Activated B cell treated with CpG ODN at 0.5 μM for 24 hours (primary cell): ENCODE measurements at regions of chr14 and their contacts with region 1.

Region 1: GRCh38 chr14:91323671-91324605 is 79.4 kb upstream of the GPR68 start:
- DNase-seq: peak; percentile 89
- ATAC-seq: peak; percentile 83
- H3K4me3 Mint-ChIP-seq: peak overlapping the region; percentile 89
- H3K27ac Mint-ChIP-seq: peak overlapping the region; percentile 100
- H3K4me1 Mint-ChIP-seq: peaks cover 60% of the 10 kb centered on the region
- H3K27me3 Mint-ChIP-seq: no peaks in the 10 kb centered on the region
- CTCF ChIP-seq: no peak

Region 2: GRCh38 chr14:91114079-91115065 is 209.6 kb before region 1 on chr14:
- CTCF ChIA-PET with region 1: no interaction called
- POLR2A ChIA-PET with region 1: no interaction called
- intact Hi-C with region 1: no loop called
- DNase-seq: peak; percentile 54
- ATAC-seq: peak; percentile 84
- H3K4me3 Mint-ChIP-seq: peak overlapping the region; percentile 98
- H3K27ac Mint-ChIP-seq: peak overlapping the region; percentile 98
- H3K4me1 Mint-ChIP-seq: peaks cover 67% of the 10 kb centered on the region
- H3K27me3 Mint-ChIP-seq: no peaks in the 10 kb centered on the region
- CTCF ChIP-seq: no peak

Region 3: DNA sequence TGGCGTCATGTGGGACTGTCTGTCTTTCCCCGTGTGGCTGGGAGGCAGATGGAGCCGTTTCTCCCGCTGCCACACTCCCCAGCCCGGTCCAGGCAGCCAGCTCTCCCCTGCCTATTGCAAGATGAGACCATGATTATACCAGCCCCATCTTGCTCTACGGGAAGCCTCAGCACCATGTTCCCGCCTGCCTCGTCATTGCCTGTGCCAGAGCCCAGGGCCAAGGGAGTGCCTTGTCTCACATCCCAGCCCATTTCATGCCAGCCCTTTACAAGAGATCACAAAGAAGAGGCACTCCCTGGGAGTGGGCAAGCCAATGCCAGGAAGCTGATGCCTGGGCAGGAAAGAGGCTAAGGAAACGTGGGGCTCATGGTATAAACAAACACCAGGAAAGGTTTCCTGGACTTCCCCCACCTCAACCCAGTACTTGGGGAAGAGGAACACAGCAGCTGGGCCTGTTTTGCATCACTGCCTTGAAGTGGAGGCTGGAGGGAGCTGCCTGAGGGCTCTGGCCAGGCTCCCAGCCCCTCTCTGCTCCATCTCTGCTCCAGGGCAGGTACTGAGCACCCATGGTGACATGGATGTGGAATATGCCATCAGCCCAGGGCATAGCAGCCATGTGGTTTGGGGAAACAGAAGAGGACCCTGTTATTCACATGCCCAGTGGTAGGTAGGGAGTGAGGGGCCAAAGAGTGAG is 103.2 kb before region 1 on chr14:
- CTCF ChIA-PET with region 1: no interaction called
- POLR2A ChIA-PET with region 1: no interaction called
- intact Hi-C with region 1: no loop called
- DNase-seq: no peak
- ATAC-seq: no peak
- H3K4me3 Mint-ChIP-seq: no peak overlapping the region
- H3K27ac Mint-ChIP-seq: no peak overlapping the region
- H3K4me1 Mint-ChIP-seq: peaks cover 8% of the 10 kb centered on the region
- H3K27me3 Mint-ChIP-seq: no peaks in the 10 kb centered on the region
- CTCF ChIP-seq: no peak

Region 4: DNA sequence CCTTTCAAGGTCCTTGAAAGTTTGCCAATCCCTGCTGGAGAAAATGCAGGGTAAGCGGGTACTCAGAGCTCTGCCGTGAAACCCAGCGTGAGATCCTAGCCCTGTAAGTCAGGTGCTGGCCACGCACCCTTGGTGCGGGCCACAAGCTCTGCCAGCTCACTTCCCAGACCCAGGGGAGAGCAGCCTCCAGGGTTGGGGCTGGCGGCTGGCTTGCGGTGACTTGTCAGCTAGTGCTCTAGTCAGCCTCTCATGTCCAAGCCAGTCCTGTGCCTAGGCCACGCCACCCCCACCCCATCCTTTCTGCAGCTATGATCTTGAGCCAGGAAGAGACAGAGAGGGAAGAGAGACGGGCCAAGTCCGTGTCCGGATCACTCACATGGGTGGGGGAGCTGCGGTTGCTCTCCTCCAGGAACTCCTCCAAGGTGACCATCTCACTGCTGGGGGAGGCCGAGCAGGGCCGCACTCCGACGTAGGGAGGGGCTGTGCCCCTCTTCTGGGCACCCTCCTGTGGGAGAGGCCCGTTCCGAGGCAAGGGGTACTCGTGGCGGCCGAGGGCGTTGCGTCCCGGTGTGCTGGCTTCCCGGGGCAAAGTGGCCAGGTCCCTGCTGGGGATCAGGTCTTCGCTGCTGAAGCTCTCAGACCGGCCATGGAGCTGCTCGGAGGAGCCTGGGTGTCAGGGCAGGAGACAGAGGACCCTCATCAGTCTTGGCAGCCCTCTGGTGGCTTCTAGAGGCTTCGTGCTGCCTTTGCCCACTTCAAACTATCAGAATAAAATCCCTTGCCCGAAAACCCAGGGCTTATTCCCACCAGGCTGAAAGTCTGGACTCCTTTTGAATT is 46.2 kb before region 1 on chr14:
- CTCF ChIA-PET with region 1: no interaction called
- POLR2A ChIA-PET with region 1: no interaction called
- intact Hi-C with region 1: no loop called
- DNase-seq: no peak
- ATAC-seq: no peak
- H3K4me3 Mint-ChIP-seq: no peak overlapping the region
- H3K27ac Mint-ChIP-seq: no peak overlapping the region
- H3K4me1 Mint-ChIP-seq: no peaks in the 10 kb centered on the region
- H3K27me3 Mint-ChIP-seq: no peaks in the 10 kb centered on the region
- CTCF ChIP-seq: no peak

Region 5: DNA sequence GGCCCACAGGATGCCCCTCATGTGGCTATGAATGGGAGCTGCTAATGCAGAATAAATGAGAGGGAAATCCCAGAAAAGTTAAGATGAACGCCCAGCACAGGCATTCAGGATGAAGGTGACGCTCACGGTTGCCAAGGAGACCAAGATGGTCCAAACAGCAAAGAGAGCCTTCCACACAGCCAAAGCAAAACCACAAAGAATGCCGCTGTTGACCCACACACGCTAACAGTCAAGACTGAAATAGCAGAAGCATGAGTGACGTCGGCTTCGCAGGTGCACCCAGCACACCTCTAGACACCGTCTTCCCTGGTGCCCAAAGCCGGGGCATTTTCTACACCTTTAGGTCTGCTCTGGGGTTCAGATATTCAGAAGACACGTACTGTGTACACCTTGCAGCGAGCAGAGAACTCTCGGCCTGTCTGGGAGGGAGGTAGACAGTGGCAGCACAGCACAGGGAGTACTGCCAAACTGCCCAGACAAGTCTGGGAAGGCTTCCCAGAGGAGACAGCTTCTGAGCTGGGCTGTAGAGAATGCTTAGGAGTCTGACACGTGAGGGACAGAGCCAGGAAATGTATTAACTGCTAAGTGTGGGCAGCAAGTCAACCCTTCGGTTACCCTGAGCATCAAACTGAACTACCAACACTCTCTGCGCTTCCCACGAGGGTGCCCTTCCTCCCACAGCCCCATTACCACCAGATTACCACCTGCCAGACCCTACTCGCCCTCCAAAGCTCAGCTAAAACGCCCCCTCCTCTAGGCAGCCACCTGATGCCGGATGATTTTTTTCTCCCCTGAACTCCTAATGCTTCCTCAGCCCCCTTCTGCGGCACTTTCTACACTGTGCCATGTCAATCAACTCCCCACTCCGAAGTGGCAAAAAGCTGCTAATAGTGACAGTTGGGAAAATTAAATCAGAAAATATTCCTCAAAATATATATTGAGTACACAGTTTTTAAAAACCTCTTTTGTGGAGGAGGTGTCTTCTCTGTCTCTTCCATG is 43.5 kb after region 1 on chr14:
- CTCF ChIA-PET with region 1: interaction called, 18 read pairs
- POLR2A ChIA-PET with region 1: interaction called, 13 read pairs
- intact Hi-C with region 1: loop called (anchors 1 kb)
- DNase-seq: peak; percentile 63
- ATAC-seq: peak; percentile 72
- H3K4me3 Mint-ChIP-seq: peak overlapping the region; percentile 66
- H3K27ac Mint-ChIP-seq: peak overlapping the region; percentile 90
- H3K4me1 Mint-ChIP-seq: peaks cover 89% of the 10 kb centered on the region
- H3K27me3 Mint-ChIP-seq: no peaks in the 10 kb centered on the region
- CTCF ChIP-seq: no peak

Region 6: DNA sequence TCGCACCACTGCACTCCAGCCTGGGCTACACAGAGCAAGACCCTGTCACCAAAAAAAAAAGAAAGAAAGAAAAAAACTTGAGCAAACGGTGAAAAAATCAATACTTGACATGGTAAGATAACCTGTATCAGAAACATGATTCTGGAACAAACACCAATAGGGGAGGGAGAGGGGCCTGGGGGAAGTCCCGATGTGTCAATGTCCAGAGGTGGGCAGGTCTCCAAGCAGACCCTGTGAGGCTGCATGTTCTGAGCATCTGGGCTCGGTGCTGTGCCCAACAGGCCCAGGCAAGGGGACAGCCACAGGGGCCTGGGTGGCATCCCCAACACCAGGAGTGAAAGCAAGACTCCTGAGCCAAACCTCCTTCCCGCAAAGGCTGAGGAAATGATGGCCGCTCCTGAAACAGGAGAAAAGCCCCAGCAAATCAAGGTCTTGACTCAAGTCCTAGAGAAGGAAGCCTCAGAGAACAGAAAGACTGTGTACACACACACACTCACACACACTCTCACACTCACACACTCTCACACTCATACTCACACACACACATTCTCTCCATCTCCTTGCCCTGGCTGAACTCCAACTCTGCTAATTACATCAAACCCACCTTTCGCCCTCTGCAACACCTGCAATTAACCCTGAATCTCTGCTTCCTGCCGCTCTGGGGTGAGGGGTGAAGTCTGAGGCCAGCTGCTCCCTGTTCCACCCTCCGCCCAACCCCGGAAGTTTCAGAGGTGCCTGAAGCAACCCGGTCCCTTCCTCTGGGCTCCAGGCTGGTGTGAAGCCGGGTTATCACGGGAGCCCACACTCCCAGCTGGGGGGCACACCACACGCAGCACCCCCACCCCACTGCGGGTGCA is 73.2 kb after region 1 on chr14:
- CTCF ChIA-PET with region 1: interaction called, 19 read pairs
- POLR2A ChIA-PET with region 1: interaction called, 11 read pairs
- intact Hi-C with region 1: no loop called
- DNase-seq: no peak
- ATAC-seq: peak; percentile 56
- H3K4me3 Mint-ChIP-seq: peak overlapping the region; percentile 66
- H3K27ac Mint-ChIP-seq: peak overlapping the region; percentile 79
- H3K4me1 Mint-ChIP-seq: peaks cover 91% of the 10 kb centered on the region
- H3K27me3 Mint-ChIP-seq: no peaks in the 10 kb centered on the region
- CTCF ChIP-seq: no peak

Region 7: DNA sequence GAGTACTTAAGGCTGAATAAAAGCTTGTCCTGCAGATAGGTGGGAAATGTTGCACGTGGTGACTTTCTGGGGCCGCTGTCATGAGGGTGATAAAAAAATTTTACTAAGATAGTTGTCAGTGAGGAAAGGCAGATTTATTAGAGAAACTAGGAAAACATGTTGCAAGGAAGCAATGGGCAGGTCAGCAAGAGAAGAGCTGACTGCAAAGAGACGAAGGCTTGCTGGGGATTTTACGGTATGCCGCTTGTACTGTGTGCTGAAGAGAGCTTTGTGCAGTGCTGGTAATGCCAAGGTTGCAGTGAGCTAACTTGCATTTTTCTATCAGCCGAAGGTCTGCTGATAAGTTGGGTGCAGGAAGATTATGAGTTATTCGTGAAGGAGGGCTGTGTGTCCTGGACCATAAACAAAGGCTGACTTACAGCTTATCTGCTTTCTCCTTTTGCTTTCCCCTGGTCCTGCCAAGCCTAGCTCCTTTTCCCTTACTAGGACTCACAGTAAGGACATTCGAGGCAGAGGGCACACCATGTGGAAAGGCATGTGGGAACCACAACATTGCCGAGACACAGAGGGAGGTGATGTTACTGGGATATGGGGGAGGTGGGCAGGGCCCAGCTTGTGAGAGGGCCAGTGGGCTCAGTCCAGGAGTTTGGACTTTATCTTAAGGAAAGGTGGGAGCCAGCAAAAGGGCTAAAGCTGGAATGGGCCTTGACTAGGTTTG is 101.0 kb after region 1 on chr14:
- CTCF ChIA-PET with region 1: interaction called, 131 read pairs
- POLR2A ChIA-PET with region 1: interaction called, 150 read pairs
- intact Hi-C with region 1: loop called (anchors 1 kb)
- DNase-seq: no peak
- ATAC-seq: no peak
- H3K4me3 Mint-ChIP-seq: no peak overlapping the region
- H3K27ac Mint-ChIP-seq: peak overlapping the region; percentile 37
- H3K4me1 Mint-ChIP-seq: peaks cover 19% of the 10 kb centered on the region
- H3K27me3 Mint-ChIP-seq: no peaks in the 10 kb centered on the region
- CTCF ChIP-seq: no peak

Region 8: GRCh38 chr14:91510174-91511042 is 186.5 kb after region 1 on chr14 and contains the start of gene PPP4R3A:
- CTCF ChIA-PET with region 1: no interaction called
- POLR2A ChIA-PET with region 1: interaction called, 8 read pairs
- intact Hi-C with region 1: loop called (anchors 1 kb)
- DNase-seq: peak; percentile 91
- ATAC-seq: peak; percentile 85
- H3K4me3 Mint-ChIP-seq: peak within 1 kb of the TSS; percentile 99
- H3K27ac Mint-ChIP-seq: peak within 1 kb of the TSS; percentile 100
- H3K4me1 Mint-ChIP-seq: peaks cover 32% of the 10 kb centered on the region
- H3K27me3 Mint-ChIP-seq: peaks cover 2% of the 10 kb centered on the region
- CTCF ChIP-seq: no peak
- total RNA-seq, gene PPP4R3A: 138 and 141 TPM in 2 replicates